AG04449 (cell line): ENCODE measurements at regions of chrX and their contacts with region 1.

Region 1: GRCh38 chrX:134603806-134604700 is 54.2 kb downstream of the PLAC1 start:
- DNase-seq: peak; percentile 67
- H3K4me3 ChIP-seq: no peak overlapping the region
- CTCF ChIP-seq: peak; percentile 41

Region 2: GRCh38 chrX:134625315-134625718 is 21.3 kb after region 1 on chrX:
- CTCF ChIA-PET with region 1: no interaction called
- POLR2A ChIA-PET with region 1: interaction called, 13 read pairs
- DNase-seq: no peak
- H3K4me3 ChIP-seq: no peak overlapping the region
- CTCF ChIP-seq: no peak